ENCODE measurements at regions of chr5 and their contacts with region 1.

Region 1: GRCh38 chr5:76818844-76819831 is at the start of gene F2RL1:
- DNase-seq: peak; percentile 66
- H3K4me3 Mint-ChIP-seq: peak within 1 kb of the TSS; percentile 77
- H3K27ac Mint-ChIP-seq: no peak within 1 kb of the TSS
- H3K4me1 Mint-ChIP-seq: peaks cover 13% of the 10 kb centered on the region
- H3K27me3 Mint-ChIP-seq: peaks cover 9% of the 10 kb centered on the region
- total RNA-seq, gene F2RL1: 2.3 to 2.9 TPM

Region 2: GRCh38 chr5:76849419-76850291 is 30.5 kb after region 1 on chr5 and contains the start of gene S100Z:
- CTCF ChIA-PET with region 1: no interaction called
- POLR2A ChIA-PET with region 1: no interaction called
- intact Hi-C with region 1: loop called (anchors 2 kb)
- DNase-seq: peak; percentile 71
- H3K4me3 Mint-ChIP-seq: peak within 1 kb of the TSS; percentile 61
- H3K27ac Mint-ChIP-seq: peak within 1 kb of the TSS; percentile 75
- H3K4me1 Mint-ChIP-seq: peaks cover 31% of the 10 kb centered on the region
- H3K27me3 Mint-ChIP-seq: no peaks in the 10 kb centered on the region
- total RNA-seq, gene S100Z: 1.8 to 2.1 TPM

Region 3: DNA sequence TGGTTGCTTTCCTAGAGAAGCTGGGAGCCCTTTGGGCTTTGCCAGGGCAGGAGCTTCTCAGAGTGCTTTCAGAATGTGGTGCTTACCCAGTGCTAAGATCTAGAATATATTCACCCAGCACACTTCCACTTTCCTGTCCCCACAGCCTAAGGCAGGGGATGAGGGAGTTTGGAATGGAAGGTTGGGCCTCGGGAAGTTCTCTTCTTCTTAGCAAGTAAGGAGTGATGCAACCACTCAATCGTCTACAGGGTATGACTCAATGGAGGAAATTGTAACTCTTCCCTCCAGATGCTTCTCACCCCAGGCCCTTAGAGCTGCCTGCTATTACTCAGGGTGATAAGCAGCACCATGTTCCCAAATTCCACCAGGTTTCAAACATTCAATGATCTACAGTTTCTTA is 180.3 kb after region 1 on chr5:
- CTCF ChIA-PET with region 1: no interaction called
- POLR2A ChIA-PET with region 1: no interaction called
- intact Hi-C with region 1: no loop called
- DNase-seq: no peak
- H3K4me3 Mint-ChIP-seq: no peak overlapping the region
- H3K27ac Mint-ChIP-seq: no peak overlapping the region
- H3K4me1 Mint-ChIP-seq: no peaks in the 10 kb centered on the region
- H3K27me3 Mint-ChIP-seq: peaks cover 12% of the 10 kb centered on the region

Measured in activated CD4-positive, alpha-beta memory T cell treated with anti-CD3 and anti-CD28 coated beads for 36 hours (primary cell).